ENCODE measurements at regions of chr6 and their contacts with region 1.

Region 1: GRCh38 chr6:159941286-159942113 is 27.4 kb upstream of the IGF2R start:
- DNase-seq: no peak
- H3K4me3 ChIP-seq: no peak overlapping the region
- H3K27ac ChIP-seq: no peak overlapping the region
- H3K4me1 ChIP-seq: no peaks in the 10 kb centered on the region
- H3K27me3 ChIP-seq: peaks cover 0 to 3% (median 0%) of the 10 kb centered on the region in 4 donors
- CTCF ChIP-seq: peak in 5 of 6 experiments; percentile 18 to 62 (median 44)
- POLR2A ChIP-seq: no peak

Region 2: GRCh38 chr6:159646733-159647132 is 294.8 kb before region 1 on chr6:
- intact Hi-C with region 1: no loop called
- DNase-seq: no peak
- H3K4me3 ChIP-seq: no peak overlapping the region
- H3K27ac ChIP-seq: no peak overlapping the region
- H3K4me1 ChIP-seq: peaks cover 0 to 8% (median 2%) of the 10 kb centered on the region in 3 donors
- H3K27me3 ChIP-seq: no peaks in the 10 kb centered on the region
- CTCF ChIP-seq: no peak
- POLR2A ChIP-seq: no peak

Region 3: DNA sequence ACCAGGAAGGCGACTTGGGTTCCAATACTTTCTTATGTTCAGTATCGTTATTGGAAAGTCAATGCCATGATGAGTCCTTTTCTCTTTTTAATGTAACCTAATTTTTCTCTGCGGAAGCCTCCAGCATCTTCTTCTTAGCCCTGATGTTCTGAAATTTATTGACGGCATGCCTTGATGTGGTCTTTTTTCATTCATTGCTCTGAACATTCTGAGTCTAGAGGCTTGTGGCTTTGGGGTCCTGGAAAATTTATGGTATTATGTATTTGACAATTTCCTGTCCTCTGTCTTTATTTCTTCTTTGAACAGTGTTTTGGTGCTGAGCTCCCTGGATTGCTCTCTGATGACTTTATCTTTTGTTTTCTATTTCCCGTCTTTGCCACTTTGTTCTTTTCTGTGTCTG is 79.4 kb before region 1 on chr6:
- intact Hi-C with region 1: loop called (anchors 10 kb)
- DNase-seq: no peak
- H3K4me3 ChIP-seq: no peak overlapping the region
- H3K27ac ChIP-seq: no peak overlapping the region
- H3K4me1 ChIP-seq: no peaks in the 10 kb centered on the region
- H3K27me3 ChIP-seq: peaks cover 0 to 14% (median 0%) of the 10 kb centered on the region in 4 donors
- CTCF ChIP-seq: no peak
- POLR2A ChIP-seq: no peak

Measured in esophagus squamous epithelium (tissue), 5 donors.